Caco-2 (cell line): ENCODE measurements at regions of chr18 and their contacts with region 1.

Region 1: DNA sequence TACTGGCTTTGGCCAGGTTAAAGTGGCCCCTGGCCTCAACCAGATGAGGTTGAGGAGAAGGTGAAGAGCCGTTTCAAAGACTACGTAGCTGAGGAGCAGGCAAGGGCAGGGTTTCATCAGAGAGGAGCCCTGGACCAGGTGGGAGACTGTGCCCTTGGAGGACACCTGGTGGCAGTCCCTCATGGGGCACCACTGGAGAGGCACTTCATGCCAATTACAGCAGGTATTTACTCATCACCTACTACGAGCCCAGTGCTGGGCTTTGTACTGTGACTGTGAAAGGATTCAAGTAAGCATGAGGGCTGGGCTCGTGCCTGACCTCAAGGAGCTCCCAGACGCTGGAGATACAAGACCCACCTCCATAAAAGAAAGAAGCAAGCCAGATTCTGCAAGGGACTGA is 37.6 kb downstream of the SMAD7 start:
- DNase-seq: no peak
- H3K4me3 ChIP-seq: no peak overlapping the region
- H3K4me3 Mint-ChIP-seq: no peak overlapping the region
- H3K27ac Mint-ChIP-seq: no peak overlapping the region
- H3K4me1 ChIP-seq: no peaks in the 10 kb centered on the region
- H3K4me1 Mint-ChIP-seq: no peaks in the 10 kb centered on the region
- H3K27me3 ChIP-seq: no peaks in the 10 kb centered on the region
- H3K27me3 Mint-ChIP-seq: no peaks in the 10 kb centered on the region
- CTCF ChIP-seq: no peak

Region 2: DNA sequence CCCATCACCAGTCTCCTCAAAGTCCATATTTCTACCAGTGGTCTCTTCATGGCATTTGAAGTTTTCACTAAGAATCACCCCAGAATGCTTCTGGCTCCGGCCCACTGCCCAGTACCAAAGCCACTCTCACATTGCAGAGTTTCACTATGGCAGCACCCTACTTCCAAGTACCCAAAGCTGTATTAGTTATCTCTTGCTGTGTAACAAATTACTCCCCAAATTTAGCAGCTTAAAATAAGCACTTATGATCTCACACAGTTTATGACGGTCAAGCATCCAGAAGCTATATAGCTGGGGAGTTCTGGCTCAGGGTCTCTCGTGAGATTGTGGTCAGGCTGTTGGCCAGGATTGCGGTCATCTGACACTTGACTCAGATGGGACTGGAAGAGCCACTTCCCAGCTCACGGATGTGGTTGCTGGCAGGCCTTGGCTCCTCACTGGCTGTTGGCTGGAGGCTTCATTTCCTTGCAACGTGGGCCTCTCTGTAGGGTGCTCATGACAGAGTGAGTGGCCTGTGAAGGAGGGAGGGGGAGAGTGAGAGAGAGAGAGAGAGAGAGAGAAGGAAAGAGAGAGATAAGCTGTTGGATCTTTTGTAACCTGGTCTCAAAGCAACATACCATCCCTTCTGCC is 184.9 kb before region 1 on chr18:
- CTCF ChIA-PET with region 1: no interaction called
- POLR2A ChIA-PET with region 1: no interaction called
- intact Hi-C with region 1: loop called (anchors 10 kb)
- DNase-seq: no peak
- H3K4me3 ChIP-seq: no peak overlapping the region
- H3K4me3 Mint-ChIP-seq: no peak overlapping the region
- H3K27ac Mint-ChIP-seq: no peak overlapping the region
- H3K4me1 ChIP-seq: no peaks in the 10 kb centered on the region
- H3K4me1 Mint-ChIP-seq: no peaks in the 10 kb centered on the region
- H3K27me3 ChIP-seq: no peaks in the 10 kb centered on the region
- H3K27me3 Mint-ChIP-seq: no peaks in the 10 kb centered on the region
- CTCF ChIP-seq: no peak